HCT116 (cell line): ENCODE measurements at regions of chr1 and their contacts with region 1.

Region 1: DNA sequence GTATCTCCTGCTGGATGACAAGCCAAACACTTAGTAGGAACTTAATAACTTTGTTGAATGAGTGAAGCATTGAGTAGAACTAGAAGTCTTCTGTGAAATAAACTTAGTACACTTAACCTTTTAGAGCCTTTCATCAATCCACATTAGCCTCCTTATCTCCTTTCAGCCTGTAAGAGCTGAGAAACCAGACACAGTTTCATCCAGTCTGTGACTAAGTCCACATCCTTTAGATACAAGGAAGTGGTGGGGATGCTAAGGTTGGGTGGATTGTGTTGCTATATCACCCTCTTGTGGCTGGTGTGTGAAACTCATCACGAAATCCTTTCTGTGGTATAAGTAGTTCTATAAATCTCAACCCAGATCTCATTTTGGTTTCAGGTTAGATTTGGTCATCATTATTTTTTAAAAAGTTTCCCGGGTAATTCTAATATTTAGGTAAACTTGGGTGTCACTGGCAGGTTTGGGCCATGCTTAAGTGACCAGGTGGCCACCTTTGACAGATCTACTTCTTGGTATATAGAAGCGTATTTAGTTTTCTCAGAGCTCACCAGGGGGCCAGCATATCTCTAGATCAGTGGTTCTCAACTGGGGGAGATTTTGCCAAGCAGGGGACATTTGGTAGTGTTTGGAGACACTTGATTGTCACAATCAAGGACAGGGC is 27.8 kb upstream of the CD84 start:
- DNase-seq: peak; percentile 68
- ATAC-seq: peak; percentile 92
- H3K4me3 ChIP-seq: no peak overlapping the region
- H3K27ac ChIP-seq: no peak overlapping the region
- H3K4me1 ChIP-seq: no peaks in the 10 kb centered on the region
- H3K27me3 ChIP-seq: peaks cover 34% of the 10 kb centered on the region; the same call in 1 of the 2 replicates
- CTCF ChIP-seq: peak; percentile 65 to 90 (median 87)
- POLR2A ChIP-seq: no peak
- RAD21 ChIP-seq: peak; percentile 91

Region 2: DNA sequence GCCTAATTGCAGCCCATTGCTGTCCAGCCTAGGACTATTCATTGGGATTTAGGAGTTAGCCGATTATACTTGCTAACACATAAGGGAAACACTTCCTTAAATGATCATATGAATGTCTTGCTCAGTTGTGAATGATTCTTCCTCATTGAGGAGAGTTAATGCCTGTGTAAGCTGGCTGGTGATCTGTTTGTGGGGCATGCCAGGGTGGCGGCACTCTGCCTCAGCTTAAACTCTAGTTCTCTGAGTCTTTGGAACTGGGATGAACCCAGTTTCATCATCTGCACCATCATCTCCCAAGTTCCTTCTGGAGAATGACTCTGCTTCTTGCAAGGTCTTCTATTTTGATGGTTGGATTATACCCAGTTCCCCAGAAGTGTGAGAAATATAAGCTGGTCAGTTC is 60.2 kb before region 1 on chr1:
- CTCF ChIA-PET with region 1: interaction called, 5 read pairs
- POLR2A ChIA-PET with region 1: no interaction called
- RAD21 ChIA-PET with region 1: interaction called in 1 of 2 experiments, 3 read pairs
- intact Hi-C with region 1: loop called (anchors 1 kb)
- DNase-seq: no peak
- ATAC-seq: no peak
- H3K4me3 ChIP-seq: no peak overlapping the region
- H3K27ac ChIP-seq: no peak overlapping the region
- H3K4me1 ChIP-seq: no peaks in the 10 kb centered on the region; a peak in 1 of 4 replicates
- H3K27me3 ChIP-seq: no peaks in the 10 kb centered on the region
- CTCF ChIP-seq: no peak
- POLR2A ChIP-seq: no peak
- RAD21 ChIP-seq: no peak

Region 3: GRCh38 chr1:160567858-160568682 is 39.1 kb before region 1 on chr1:
- CTCF ChIA-PET with region 1: no interaction called
- POLR2A ChIA-PET with region 1: no interaction called
- RAD21 ChIA-PET with region 1: no interaction called
- intact Hi-C with region 1: no loop called
- DNase-seq: no peak
- ATAC-seq: no peak
- H3K4me3 ChIP-seq: no peak overlapping the region
- H3K27ac ChIP-seq: no peak overlapping the region
- H3K4me1 ChIP-seq: no peaks in the 10 kb centered on the region
- H3K27me3 ChIP-seq: no peaks in the 10 kb centered on the region; the same call in 1 of the 2 replicates
- CTCF ChIP-seq: no peak
- POLR2A ChIP-seq: no peak
- RAD21 ChIP-seq: no peak

Region 4: GRCh38 chr1:160768295-160768657 is 161.1 kb after region 1 on chr1:
- CTCF ChIA-PET with region 1: no interaction called
- POLR2A ChIA-PET with region 1: no interaction called
- RAD21 ChIA-PET with region 1: no interaction called
- intact Hi-C with region 1: no loop called
- DNase-seq: no peak
- ATAC-seq: peak; percentile 81
- H3K4me3 ChIP-seq: no peak overlapping the region
- H3K27ac ChIP-seq: no peak overlapping the region
- H3K4me1 ChIP-seq: no peaks in the 10 kb centered on the region
- H3K27me3 ChIP-seq: no peaks in the 10 kb centered on the region
- CTCF ChIP-seq: peak; percentile 34 to 67 (median 49); a peak in 5 of 6 replicates
- POLR2A ChIP-seq: no peak
- RAD21 ChIP-seq: peak; percentile 44